ENCODE measurements at regions of chr1 and their contacts with region 1.

Region 1: GRCh38 chr1:205919026-205919746 is 24.1 kb downstream of the SLC26A9 start:
- H3K4me3 ChIP-seq: no peak overlapping the region
- H3K27ac ChIP-seq: no peak overlapping the region
- H3K4me1 ChIP-seq: no peaks in the 10 kb centered on the region
- CTCF ChIP-seq: peak; percentile 95

Region 2: GRCh38 chr1:205791568-205792180 is 127.5 kb before region 1 on chr1:
- CTCF ChIA-PET with region 1: interaction called, 55 read pairs
- POLR2A ChIA-PET with region 1: no interaction called
- H3K4me3 ChIP-seq: no peak overlapping the region
- H3K27ac ChIP-seq: no peak overlapping the region
- H3K4me1 ChIP-seq: 0 out of 2 replicates have a peak, but pooled peaks cover under 1% of the 10 kb centered on the region
- CTCF ChIP-seq: peak; percentile 79

Region 3: GRCh38 chr1:205812878-205813754 is 106.1 kb before region 1 on chr1 and contains the start of gene SLC41A1:
- CTCF ChIA-PET with region 1: no interaction called
- POLR2A ChIA-PET with region 1: no interaction called
- H3K4me3 ChIP-seq: peak within 1 kb of the TSS; percentile 76
- H3K27ac ChIP-seq: peak within 1 kb of the TSS; percentile 58; the same call in 1 of the 2 replicates
- H3K4me1 ChIP-seq: peaks cover 12% of the 10 kb centered on the region
- CTCF ChIP-seq: no peak

Region 4: GRCh38 chr1:205961405-205961804 is 42.2 kb after region 1 on chr1:
- CTCF ChIA-PET with region 1: interaction called, 17 read pairs
- POLR2A ChIA-PET with region 1: no interaction called
- H3K4me3 ChIP-seq: no peak overlapping the region
- H3K27ac ChIP-seq: peak overlapping the region; percentile 22; the same call in 1 of the 2 replicates
- H3K4me1 ChIP-seq: peaks cover 9% of the 10 kb centered on the region
- CTCF ChIP-seq: no peak

Region 5: GRCh38 chr1:205983925-205984725 is 64.9 kb after region 1 on chr1:
- CTCF ChIA-PET with region 1: interaction called, 527 read pairs
- POLR2A ChIA-PET with region 1: no interaction called
- H3K4me3 ChIP-seq: no peak overlapping the region
- H3K27ac ChIP-seq: no peak overlapping the region
- H3K4me1 ChIP-seq: no peaks in the 10 kb centered on the region
- CTCF ChIP-seq: peak; percentile 51; the same call in 1 of the 2 replicates

Region 6: DNA sequence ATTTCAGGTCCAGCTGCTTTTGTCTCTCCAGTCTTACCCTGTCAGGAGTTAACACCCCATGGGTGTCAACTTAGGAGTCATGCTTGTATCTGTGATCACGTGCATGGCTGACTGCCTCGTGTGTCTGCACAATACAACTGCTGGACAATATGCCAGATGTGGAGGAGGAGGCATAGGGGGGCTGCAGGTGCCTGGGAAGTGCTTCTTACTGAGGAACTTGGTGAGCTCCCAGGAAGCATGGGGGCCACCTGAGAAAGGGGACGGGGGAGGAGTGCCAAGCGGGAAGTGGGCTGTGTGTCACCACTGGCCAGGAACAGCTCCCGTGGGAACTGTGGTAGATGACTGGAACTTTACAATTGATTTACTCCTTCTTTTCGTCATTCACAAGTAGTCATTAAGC is 143.3 kb after region 1 on chr1:
- CTCF ChIA-PET with region 1: no interaction called
- POLR2A ChIA-PET with region 1: no interaction called
- H3K4me3 ChIP-seq: no peak overlapping the region
- H3K27ac ChIP-seq: no peak overlapping the region
- H3K4me1 ChIP-seq: no peaks in the 10 kb centered on the region
- CTCF ChIP-seq: no peak

Region 7: GRCh38 chr1:206106328-206107167 is 187.4 kb after region 1 on chr1:
- CTCF ChIA-PET with region 1: interaction called, 43 read pairs
- POLR2A ChIA-PET with region 1: no interaction called
- H3K4me3 ChIP-seq: no peak overlapping the region
- H3K27ac ChIP-seq: no peak overlapping the region
- H3K4me1 ChIP-seq: no peaks in the 10 kb centered on the region
- CTCF ChIP-seq: peak; percentile 81